A549 (cell line): ENCODE measurements at regions of chrX and their contacts with region 1.

Region 1: DNA sequence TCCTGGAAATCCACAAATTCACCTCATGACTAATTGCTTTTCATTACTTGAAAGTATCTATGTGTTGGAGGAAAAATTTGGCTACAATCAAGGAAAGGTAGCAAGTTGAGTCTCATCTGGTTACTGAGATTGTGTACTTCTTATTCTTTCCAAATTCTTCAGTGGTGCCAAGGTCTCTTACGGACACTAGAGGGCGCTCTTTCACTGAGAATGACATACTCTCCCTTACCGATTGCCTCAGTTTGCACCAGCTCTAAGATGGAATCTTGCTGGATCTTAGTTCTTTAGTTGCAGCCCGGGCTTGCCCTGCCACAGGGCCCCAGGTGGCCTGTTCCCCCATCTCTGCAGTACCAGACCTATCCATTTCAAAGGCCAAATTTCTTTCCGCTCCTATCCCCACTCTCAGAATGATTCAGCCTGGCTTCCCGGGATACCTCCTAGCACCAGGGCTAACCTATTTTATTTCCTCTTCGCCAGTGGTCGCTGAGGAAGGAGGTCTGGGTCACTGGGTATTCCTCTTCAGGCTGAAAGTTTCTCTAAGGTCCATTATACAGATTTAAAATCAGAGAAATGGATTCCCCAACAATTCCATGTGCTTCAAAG is 24.6 kb upstream of the GPR50 start:
- DNase-seq: peak; percentile 29 to 57
- ATAC-seq: peak; percentile 82 to 92; a peak in 5 of 6 replicates
- H3K4me3 ChIP-seq: no peak overlapping the region
- H3K27ac ChIP-seq: peak overlapping the region in 1 of 2 experiments; percentile 16; a peak in 1 of 6 replicates
- H3K4me1 ChIP-seq: peaks cover 9% of the 10 kb centered on the region
- CTCF ChIP-seq: peak; percentile 78
- EP300 ChIP-seq: no peak
- POLR2A ChIP-seq: no peak
- RAD21 ChIP-seq: peak; percentile 78 to 87

Region 2: GRCh38 chrX:151359931-151360871 is 208.4 kb after region 1 on chrX:
- CTCF ChIA-PET with region 1: interaction called, 10 read pairs
- POLR2A ChIA-PET with region 1: no interaction called
- DNase-seq: peak in 1 of 2 experiments; percentile 41
- ATAC-seq: peak; percentile 93 to 98
- H3K4me3 ChIP-seq: peak overlapping the region; percentile 23; the same call in 1 of the 3 replicates
- H3K27ac ChIP-seq: no peak overlapping the region
- H3K4me1 ChIP-seq: no peaks in the 10 kb centered on the region
- CTCF ChIP-seq: peak; percentile 54
- EP300 ChIP-seq: no peak
- POLR2A ChIP-seq: no peak
- RAD21 ChIP-seq: peak; percentile 54 to 56

Region 3: DNA sequence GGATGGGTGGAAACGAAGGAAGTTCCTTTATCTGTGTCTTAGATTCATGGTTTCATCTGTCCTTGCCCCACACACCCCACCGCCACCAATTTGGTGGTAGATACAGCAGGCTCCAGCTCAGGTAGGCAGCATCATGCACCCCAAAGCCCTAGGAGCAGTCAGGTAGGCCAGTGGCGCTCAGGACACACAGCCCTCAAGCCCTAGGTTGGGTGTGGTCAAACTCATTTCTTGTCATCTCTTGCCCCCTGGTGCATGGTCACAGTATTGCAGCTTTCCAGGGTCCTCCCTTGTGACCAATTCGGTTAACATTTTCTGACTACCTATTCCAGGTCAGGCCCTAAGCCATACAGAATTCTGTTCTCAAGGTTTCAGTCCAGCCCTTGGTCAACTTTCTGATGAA is 529.0 kb after region 1 on chrX:
- CTCF ChIA-PET with region 1: interaction called, 10 read pairs
- POLR2A ChIA-PET with region 1: no interaction called
- DNase-seq: peak; percentile 13 to 58
- ATAC-seq: peak; percentile 74 to 94
- H3K4me3 ChIP-seq: no peak overlapping the region
- H3K27ac ChIP-seq: no peak overlapping the region
- H3K4me1 ChIP-seq: no peaks in the 10 kb centered on the region
- CTCF ChIP-seq: peak; percentile 47
- EP300 ChIP-seq: no peak
- POLR2A ChIP-seq: no peak
- RAD21 ChIP-seq: peak; percentile 70 to 87

Region 4: GRCh38 chrX:151762802-151763201 is 611.0 kb after region 1 on chrX:
- CTCF ChIA-PET with region 1: no interaction called
- POLR2A ChIA-PET with region 1: no interaction called
- DNase-seq: peak in 1 of 2 experiments; percentile 8
- ATAC-seq: peak in 1 of 2 experiments; percentile 54; a peak in 2 of 6 replicates
- H3K4me3 ChIP-seq: no peak overlapping the region
- H3K27ac ChIP-seq: no peak overlapping the region
- H3K4me1 ChIP-seq: no peaks in the 10 kb centered on the region
- CTCF ChIP-seq: no peak
- EP300 ChIP-seq: no peak
- POLR2A ChIP-seq: no peak
- RAD21 ChIP-seq: peak in 1 of 2 experiments; percentile 14; a peak in 1 of 5 replicates